ENCODE measurements at regions of chr16 and their contacts with region 1.

Region 1: GRCh38 chr16:18801197-18801972 is at the start of gene ARL6IP1:
- DNase-seq: peak; percentile 95
- ATAC-seq: peak; percentile 97
- H3K4me3 ChIP-seq: peak within 1 kb of the TSS; percentile 91
- H3K27ac ChIP-seq: peak within 1 kb of the TSS; percentile 93
- H3K4me1 ChIP-seq: peaks cover 12% of the 10 kb centered on the region
- H3K27me3 ChIP-seq: no peaks in the 10 kb centered on the region
- CTCF ChIP-seq: peak; percentile 89 to 92 (median 91); a peak in 5 of 6 replicates
- EP300 ChIP-seq: peak in 1 of 2 experiments; percentile 9; a peak in 2 of 4 replicates
- POLR2A ChIP-seq: peak; percentile 100
- RAD21 ChIP-seq: peak; percentile 56
- polyA plus RNA-seq, gene ARL6IP1: 219 to 334 TPM

Region 2: DNA sequence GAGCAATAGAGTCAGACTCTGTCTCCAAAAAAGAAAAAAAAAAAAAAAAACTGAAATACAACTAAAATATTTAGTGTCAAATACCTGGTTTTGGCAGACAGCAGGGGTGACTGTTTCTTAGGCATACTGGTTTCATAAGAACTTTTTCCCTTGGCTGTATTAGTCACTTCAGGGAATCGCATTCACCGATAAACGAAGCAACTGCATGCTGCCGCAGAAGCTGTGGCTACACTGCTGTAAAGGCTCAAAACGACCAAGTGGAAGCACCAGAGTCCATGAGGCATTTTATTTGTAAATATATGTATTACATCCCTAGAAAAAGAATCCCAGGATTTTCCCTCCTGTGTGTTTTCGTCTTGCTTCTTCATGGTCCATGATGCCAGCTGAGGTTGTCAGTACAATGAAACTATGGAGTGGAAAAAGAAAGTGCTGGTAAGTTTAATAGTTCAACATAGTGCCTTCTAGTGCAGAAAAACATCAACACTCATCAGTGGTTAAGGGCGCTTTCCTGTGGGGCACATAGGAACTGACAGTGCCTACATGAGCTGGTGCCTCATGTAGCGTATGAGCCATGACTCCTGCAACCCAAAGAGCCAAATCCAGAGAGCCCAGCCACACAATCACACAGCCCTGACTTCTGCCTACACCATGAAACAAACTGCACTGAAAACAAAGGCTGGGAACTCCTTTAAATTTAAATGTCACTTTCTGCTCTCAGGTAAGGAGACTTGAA is 18.5 kb before region 1 on chr16:
- CTCF ChIA-PET with region 1: interaction called, 80 read pairs
- POLR2A ChIA-PET with region 1: interaction called, 128 read pairs
- RAD21 ChIA-PET with region 1: interaction called, 71 read pairs
- SMC1A ChIA-PET with region 1: interaction called, 64 read pairs
- in situ Hi-C with region 1: no loop called
- intact Hi-C with region 1: no loop called
- DNase-seq: no peak
- ATAC-seq: no peak
- H3K4me3 ChIP-seq: no peak overlapping the region
- H3K27ac ChIP-seq: no peak overlapping the region
- H3K4me1 ChIP-seq: peaks cover 26% of the 10 kb centered on the region
- H3K27me3 ChIP-seq: no peaks in the 10 kb centered on the region
- CTCF ChIP-seq: no peak
- EP300 ChIP-seq: no peak
- POLR2A ChIP-seq: 0 out of 2 replicates have a peak, but pooled peaks have one; percentile 29
- RAD21 ChIP-seq: no peak

Region 3: DNA sequence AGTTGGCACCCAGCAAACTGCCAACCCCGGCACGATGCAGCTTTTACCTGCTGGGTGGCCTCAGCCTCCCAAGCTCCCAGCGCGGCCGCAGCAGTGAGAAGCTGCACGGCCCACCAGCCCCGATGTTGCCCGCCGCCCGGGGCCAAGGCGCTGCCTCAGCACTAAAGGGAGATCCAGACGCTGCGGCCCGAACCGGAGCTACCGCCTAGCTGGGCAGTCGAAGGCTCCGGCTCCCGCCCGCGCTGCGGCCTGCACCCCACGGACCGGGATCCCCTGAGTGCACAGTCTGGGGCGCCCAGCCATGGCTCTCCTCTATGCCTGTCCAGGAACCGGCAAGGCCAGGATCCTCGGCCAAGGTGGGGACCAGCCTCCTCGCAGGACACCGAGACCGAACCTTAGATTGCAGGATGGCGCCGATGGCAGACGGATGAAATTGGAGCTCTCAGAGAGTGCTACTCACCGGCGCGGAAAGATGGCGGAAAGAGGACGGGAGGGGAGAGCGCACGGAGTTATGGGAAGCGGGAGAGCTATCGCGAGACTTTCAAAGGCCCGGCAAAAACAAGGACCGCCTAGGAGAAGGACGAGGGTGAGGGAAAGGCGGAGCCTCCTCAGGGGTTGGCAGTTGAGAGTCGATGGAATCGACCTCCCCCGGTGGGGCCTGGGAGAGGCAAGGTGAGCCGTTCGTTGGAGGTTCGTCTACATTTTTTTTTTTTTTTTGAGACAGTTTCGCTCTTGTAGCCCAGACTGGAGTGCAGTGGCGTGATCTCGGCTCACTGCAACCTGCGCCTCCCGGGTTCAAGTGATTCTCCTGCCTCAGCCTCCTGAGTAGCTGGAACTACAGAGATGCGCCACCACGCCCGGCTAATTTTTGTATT is 11.3 kb before region 1 on chr16 and contains the start of gene RPS15A:
- CTCF ChIA-PET with region 1: interaction called, 80 read pairs
- POLR2A ChIA-PET with region 1: interaction called, 128 read pairs
- RAD21 ChIA-PET with region 1: interaction called, 71 read pairs
- SMC1A ChIA-PET with region 1: interaction called, 64 read pairs
- in situ Hi-C with region 1: no loop called
- intact Hi-C with region 1: no loop called
- DNase-seq: peak; percentile 88
- ATAC-seq: peak; percentile 89
- H3K4me3 ChIP-seq: peak within 1 kb of the TSS; percentile 93
- H3K27ac ChIP-seq: peak within 1 kb of the TSS; percentile 91
- H3K4me1 ChIP-seq: peaks cover 10% of the 10 kb centered on the region
- H3K27me3 ChIP-seq: no peaks in the 10 kb centered on the region
- CTCF ChIP-seq: no peak
- EP300 ChIP-seq: 0 out of 4 replicates have a peak, but pooled peaks of 1 of the 2 experiments have one; percentile 8
- POLR2A ChIP-seq: peak; percentile 99
- RAD21 ChIP-seq: no peak
- polyA plus RNA-seq, gene RPS15A: 2,843 to 3,155 TPM

Region 4: DNA sequence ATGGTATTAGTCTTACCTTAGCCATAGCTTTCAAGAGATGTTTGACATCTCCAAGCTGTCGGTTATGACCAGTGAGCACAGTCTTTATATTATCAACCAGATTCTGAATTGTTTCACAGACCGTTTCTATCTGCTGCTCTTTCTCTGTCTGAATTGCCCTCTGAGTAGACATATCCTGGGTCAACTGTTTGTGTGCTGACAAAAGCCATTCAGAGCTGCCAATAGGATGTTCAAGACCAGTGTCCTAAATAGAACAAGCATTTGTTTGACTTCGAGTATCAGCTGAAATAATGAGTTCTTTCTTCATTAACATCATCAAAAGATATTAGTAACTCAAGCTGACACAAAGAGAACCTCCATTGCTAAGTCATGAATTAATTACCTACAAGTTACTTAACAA is 14.9 kb after region 1 on chr16:
- CTCF ChIA-PET with region 1: interaction called, 29 read pairs
- POLR2A ChIA-PET with region 1: interaction called, 4 read pairs
- RAD21 ChIA-PET with region 1: interaction called, 5 read pairs
- SMC1A ChIA-PET with region 1: interaction called, 12 read pairs
- in situ Hi-C with region 1: no loop called
- intact Hi-C with region 1: no loop called
- DNase-seq: no peak
- ATAC-seq: no peak
- H3K4me3 ChIP-seq: no peak overlapping the region
- H3K27ac ChIP-seq: no peak overlapping the region
- H3K4me1 ChIP-seq: no peaks in the 10 kb centered on the region
- H3K27me3 ChIP-seq: no peaks in the 10 kb centered on the region
- CTCF ChIP-seq: no peak
- EP300 ChIP-seq: no peak
- POLR2A ChIP-seq: no peak
- RAD21 ChIP-seq: no peak

Region 5: DNA sequence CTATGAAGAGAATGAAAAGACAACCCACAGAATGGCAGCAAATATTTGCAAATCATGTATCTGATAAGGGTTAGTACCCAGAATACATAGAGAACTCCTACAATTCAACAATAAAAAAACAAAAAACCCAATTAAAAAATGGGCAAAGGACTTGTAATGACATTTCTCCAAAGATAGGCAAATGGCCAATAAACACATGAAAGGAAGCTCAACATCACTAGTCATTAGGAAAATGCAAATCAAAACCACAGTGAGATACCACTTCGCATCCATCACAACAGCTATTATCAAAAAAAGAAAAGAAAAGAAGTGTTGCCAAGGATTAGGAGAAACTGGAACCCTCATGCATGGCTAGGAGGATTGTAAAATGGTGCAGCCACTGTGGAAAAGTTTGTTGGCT is 45.0 kb after region 1 on chr16:
- CTCF ChIA-PET with region 1: interaction called, 14 read pairs
- POLR2A ChIA-PET with region 1: interaction called, 5 read pairs
- RAD21 ChIA-PET with region 1: no interaction called
- SMC1A ChIA-PET with region 1: no interaction called
- in situ Hi-C with region 1: no loop called
- intact Hi-C with region 1: no loop called
- DNase-seq: no peak
- ATAC-seq: no peak
- H3K4me3 ChIP-seq: no peak overlapping the region
- H3K27ac ChIP-seq: no peak overlapping the region
- H3K4me1 ChIP-seq: no peaks in the 10 kb centered on the region
- H3K27me3 ChIP-seq: no peaks in the 10 kb centered on the region
- CTCF ChIP-seq: no peak
- EP300 ChIP-seq: no peak
- POLR2A ChIP-seq: no peak
- RAD21 ChIP-seq: no peak

Region 6: DNA sequence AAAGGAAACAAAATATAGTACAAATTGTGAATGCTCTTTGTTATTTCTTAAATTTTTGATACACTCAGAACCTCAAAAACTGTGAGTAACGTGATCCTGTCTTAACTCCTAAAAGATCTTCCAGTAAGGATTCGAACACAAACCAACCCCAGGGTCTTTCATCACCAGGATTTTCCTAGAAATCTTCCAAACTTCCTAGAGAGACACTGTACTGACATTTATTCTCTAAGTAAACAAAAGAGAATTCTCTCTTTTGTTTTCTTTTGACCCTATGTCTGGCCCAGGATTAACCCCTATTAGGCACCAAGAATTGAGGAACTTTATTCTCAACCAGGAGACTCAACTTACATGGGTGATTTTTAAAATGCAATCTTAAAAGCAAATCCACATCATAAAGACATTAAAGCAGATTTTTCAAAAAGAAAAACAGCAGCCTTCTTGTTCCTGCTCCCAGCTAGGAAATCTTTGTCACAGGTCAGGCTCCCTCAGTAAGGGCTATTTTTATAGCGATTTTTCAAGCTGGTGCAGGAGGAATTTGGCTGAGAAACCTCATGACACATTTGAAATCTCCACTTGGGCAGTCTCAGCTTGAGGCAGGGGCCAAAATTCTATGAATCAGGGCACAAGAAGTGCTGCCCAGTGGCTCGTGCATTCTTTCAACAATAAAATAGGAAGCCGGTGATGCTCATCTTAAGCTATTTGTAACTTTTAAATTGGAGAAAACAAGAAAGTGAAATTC is 131.0 kb after region 1 on chr16:
- CTCF ChIA-PET with region 1: interaction called, 5 read pairs
- POLR2A ChIA-PET with region 1: interaction called, 3 read pairs
- RAD21 ChIA-PET with region 1: interaction called, 4 read pairs
- SMC1A ChIA-PET with region 1: interaction called, 3 read pairs
- in situ Hi-C with region 1: no loop called
- intact Hi-C with region 1: loop called (anchors 5 kb)
- DNase-seq: no peak
- ATAC-seq: no peak
- H3K4me3 ChIP-seq: no peak overlapping the region
- H3K27ac ChIP-seq: no peak overlapping the region
- H3K4me1 ChIP-seq: peaks cover 6% of the 10 kb centered on the region
- H3K27me3 ChIP-seq: no peaks in the 10 kb centered on the region
- CTCF ChIP-seq: no peak
- EP300 ChIP-seq: no peak
- POLR2A ChIP-seq: no peak
- RAD21 ChIP-seq: no peak

Region 7: GRCh38 chr16:18969050-18969854 is 167.9 kb after region 1 on chr16:
- CTCF ChIA-PET with region 1: interaction called, 15 read pairs
- POLR2A ChIA-PET with region 1: no interaction called
- RAD21 ChIA-PET with region 1: interaction called, 8 read pairs
- SMC1A ChIA-PET with region 1: interaction called, 18 read pairs
- in situ Hi-C with region 1: loop called (anchors 5 kb)
- intact Hi-C with region 1: loop called (anchors 1 kb)
- DNase-seq: peak; percentile 16
- ATAC-seq: peak; percentile 94
- H3K4me3 ChIP-seq: peak overlapping the region; percentile 68
- H3K27ac ChIP-seq: no peak overlapping the region
- H3K4me1 ChIP-seq: no peaks in the 10 kb centered on the region
- H3K27me3 ChIP-seq: no peaks in the 10 kb centered on the region
- CTCF ChIP-seq: peak; percentile 87 to 95 (median 90)
- EP300 ChIP-seq: 0 out of 4 replicates have a peak, but pooled peaks of 1 of the 2 experiments have one; percentile 29
- POLR2A ChIP-seq: no peak
- RAD21 ChIP-seq: peak; percentile 90